Psoas muscle (tissue), 8 donors: ENCODE measurements at regions of chr19 and their contacts with region 1.

Region 1: DNA sequence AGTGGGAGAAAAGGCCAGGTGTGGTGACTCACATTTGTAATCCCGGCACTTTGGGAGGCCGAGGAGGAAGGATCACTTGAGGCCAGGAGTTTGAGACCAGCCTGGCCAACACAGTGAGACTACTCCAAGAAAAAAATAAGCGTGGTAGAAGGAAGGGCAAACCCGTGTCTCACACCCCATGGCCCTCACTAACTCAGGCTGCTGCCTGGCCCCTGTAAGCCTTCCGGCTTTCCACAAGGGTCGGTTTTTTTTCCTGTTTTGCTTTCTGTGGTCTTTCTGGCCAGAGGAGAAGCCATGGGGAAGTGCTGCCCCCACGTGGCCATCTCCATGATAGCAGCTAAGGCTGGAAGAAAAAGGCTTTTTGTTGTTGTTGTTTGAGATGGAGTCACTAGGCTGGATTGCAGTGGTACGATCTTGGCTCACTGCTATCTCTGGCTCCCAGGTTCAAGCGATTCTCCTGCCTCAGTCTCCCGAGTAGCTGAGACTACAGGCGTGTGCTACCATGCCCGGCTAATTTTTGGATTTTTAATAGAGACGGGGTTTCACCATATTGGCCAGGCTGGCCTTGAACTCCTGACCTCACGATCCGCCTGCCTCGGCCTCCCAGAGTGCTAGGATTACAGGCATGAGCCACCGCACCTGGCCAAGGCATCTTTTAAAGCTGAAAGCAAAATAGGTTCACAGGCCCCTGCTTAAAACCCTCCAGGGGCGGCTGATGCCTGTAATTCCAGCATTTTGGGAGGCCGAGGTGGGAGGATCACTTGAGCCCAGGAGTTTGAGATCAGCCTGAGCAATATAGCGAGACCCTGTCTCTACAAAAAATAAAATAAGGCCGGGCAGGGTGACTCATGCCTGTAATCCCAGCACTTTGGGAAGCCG is 7.5 kb upstream of the ARHGEF18 start:
- DNase-seq: peak; percentile 80 to 86
- ATAC-seq: peak; percentile 51 to 83 (median 60)
- H3K4me3 ChIP-seq: no peak overlapping the region
- H3K27ac ChIP-seq: no peak overlapping the region
- H3K4me1 ChIP-seq: no peaks in the 10 kb centered on the region
- H3K27me3 ChIP-seq: peaks cover 0 to 4% (median 1%) of the 10 kb centered on the region in 3 donors
- CTCF ChIP-seq: peak; percentile 94

Region 2: GRCh38 chr19:7109678-7110289 is 231.4 kb before region 1 on chr19:
- intact Hi-C with region 1: no loop called
- DNase-seq: no peak
- ATAC-seq: no peak
- H3K4me3 ChIP-seq: no peak overlapping the region
- H3K27ac ChIP-seq: no peak overlapping the region
- H3K4me1 ChIP-seq: no peaks in the 10 kb centered on the region
- H3K27me3 ChIP-seq: peaks cover 0 to 7% (median 0%) of the 10 kb centered on the region in 3 donors
- CTCF ChIP-seq: no peak

Region 3: GRCh38 chr19:7145494-7146485 is 195.4 kb before region 1 on chr19:
- intact Hi-C with region 1: loop called (anchors 1 to 5 kb)
- DNase-seq: no peak
- ATAC-seq: no peak
- H3K4me3 ChIP-seq: no peak overlapping the region
- H3K27ac ChIP-seq: peak overlapping the region; percentile 78
- H3K4me1 ChIP-seq: peaks cover 15% of the 10 kb centered on the region
- H3K27me3 ChIP-seq: no peaks in the 10 kb centered on the region
- CTCF ChIP-seq: no peak

Region 4: GRCh38 chr19:7152568-7152967 is 188.6 kb before region 1 on chr19:
- intact Hi-C with region 1: loop called (anchors 1 to 5 kb)
- DNase-seq: no peak
- ATAC-seq: peak in 2 of 4 donors; percentile 12
- H3K4me3 ChIP-seq: no peak overlapping the region
- H3K27ac ChIP-seq: peak overlapping the region; percentile 46
- H3K4me1 ChIP-seq: no peaks in the 10 kb centered on the region
- H3K27me3 ChIP-seq: no peaks in the 10 kb centered on the region
- CTCF ChIP-seq: no peak